ENCODE measurements at regions of chr1 and their contacts with region 1.

Region 1: DNA sequence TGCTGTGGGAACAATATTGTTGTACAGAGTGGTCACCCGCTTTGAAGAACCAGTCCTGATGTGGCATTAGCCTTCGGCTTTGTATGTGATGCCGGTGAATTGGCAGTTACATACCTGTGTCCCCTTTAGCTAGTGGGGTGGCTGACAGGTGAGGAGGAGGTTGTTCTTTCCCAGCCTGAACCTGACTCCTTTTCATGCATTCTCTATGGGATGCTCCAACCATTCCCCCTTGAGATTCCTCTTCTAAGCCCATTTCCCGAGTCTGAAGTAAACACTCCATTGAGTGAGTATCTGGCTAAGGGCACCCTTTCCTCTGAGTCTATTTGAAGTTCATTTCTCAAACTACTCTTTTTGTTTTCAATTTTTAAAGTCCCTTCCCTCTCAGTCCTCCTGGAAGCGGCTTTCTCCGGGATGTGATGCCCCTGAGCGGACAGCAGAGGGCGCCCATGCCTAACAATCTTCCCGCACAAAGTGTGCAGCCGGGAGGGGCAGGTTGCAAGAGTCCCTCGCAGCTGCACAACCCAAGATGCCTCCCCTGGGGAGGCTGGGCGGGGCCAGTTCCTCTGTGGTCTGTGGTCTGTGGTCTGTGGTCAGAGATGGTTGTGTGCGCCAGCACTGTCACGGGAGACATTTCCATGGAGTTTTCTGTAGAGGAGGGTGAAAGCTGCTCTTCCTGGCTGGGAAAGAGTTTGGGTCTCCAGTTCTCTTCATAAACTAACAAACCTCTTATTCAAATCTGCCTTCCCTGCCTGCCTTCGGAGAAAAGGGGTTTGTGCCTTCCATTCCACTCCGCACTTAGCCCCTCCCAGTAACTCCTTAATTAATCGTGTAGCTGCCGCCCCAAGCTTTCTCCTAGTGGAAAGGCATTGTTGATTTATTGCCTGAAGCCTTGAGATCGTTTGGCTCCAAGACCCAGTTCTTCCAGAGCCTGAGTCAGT is 36.4 kb upstream of the LMX1A start:
- DNase-seq: peak; percentile 94
- ATAC-seq: peak; percentile 99
- H3K4me3 ChIP-seq: peak overlapping the region in 1 of 5 experiments; percentile 24
- H3K4me3 Mint-ChIP-seq: peak overlapping the region; percentile 55
- H3K27ac ChIP-seq: no peak overlapping the region
- H3K27ac Mint-ChIP-seq: peak overlapping the region; percentile 91
- H3K4me1 ChIP-seq: peaks cover 20 to 33% of the 10 kb centered on the region in 2 donors
- H3K4me1 Mint-ChIP-seq: peaks cover 15% of the 10 kb centered on the region
- H3K27me3 ChIP-seq: peaks cover 0 to 84% (median 75%) of the 10 kb centered on the region in 4 experiments
- H3K27me3 Mint-ChIP-seq: peaks cover 82% of the 10 kb centered on the region
- CTCF ChIP-seq: peak; percentile 93

Region 2: GRCh38 chr1:164813776-164814175 is 579.1 kb before region 1 on chr1:
- CTCF ChIA-PET with region 1: no interaction called
- POLR2A ChIA-PET with region 1: no interaction called
- intact Hi-C with region 1: no loop called
- DNase-seq: no peak
- ATAC-seq: no peak
- H3K4me3 ChIP-seq: no peak overlapping the region
- H3K4me3 Mint-ChIP-seq: no peak overlapping the region
- H3K27ac ChIP-seq: no peak overlapping the region
- H3K27ac Mint-ChIP-seq: no peak overlapping the region
- H3K4me1 ChIP-seq: no peaks in the 10 kb centered on the region
- H3K4me1 Mint-ChIP-seq: no peaks in the 10 kb centered on the region
- H3K27me3 ChIP-seq: no peaks in the 10 kb centered on the region
- H3K27me3 Mint-ChIP-seq: peaks cover 6% of the 10 kb centered on the region
- CTCF ChIP-seq: no peak

Region 3: DNA sequence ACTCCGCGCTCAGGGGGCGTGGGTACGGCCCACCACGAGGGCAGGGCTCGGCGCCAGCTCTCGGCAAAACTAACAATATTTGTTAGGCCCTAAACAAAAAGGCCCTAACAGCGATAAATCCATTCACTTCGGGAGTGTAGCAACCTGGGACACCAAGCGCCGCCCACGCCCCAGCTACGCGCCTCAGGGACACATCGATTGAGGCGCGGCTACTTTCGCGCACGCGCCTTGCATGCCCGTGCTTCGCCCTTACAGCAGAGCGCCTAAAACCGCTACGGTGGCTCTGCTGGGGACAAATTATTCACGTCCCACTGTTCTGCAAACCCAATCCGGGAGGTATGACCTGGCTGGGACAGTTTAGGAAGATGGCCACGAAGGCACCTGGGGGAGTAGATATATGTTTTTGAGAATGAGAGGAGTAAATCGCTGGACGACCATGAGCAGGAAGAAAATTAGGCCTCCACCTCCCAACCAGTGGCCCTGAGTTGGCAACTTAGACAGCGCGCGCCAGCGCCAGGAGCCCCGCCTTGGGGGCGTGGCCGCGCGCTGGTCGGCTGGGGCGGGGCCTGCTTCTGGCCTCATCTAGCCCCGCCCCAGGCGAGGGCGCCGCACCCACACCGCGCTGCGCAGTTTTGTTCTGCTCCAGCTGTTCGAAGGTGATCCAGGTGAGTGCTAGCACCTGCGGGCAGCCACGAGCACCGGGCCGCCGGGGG is 237.9 kb after region 1 on chr1 and contains the start of gene MGST3:
- CTCF ChIA-PET with region 1: no interaction called
- POLR2A ChIA-PET with region 1: no interaction called
- intact Hi-C with region 1: loop called (anchors 1 kb)
- DNase-seq: peak; percentile 95
- ATAC-seq: peak; percentile 94
- H3K4me3 ChIP-seq: peak within 1 kb of the TSS; percentile 74 to 93 (median 84)
- H3K4me3 Mint-ChIP-seq: no peak within 1 kb of the TSS
- H3K27ac ChIP-seq: peak within 1 kb of the TSS; percentile 72 to 83
- H3K27ac Mint-ChIP-seq: peak within 1 kb of the TSS; percentile 67
- H3K4me1 ChIP-seq: peaks cover 27 to 31% of the 10 kb centered on the region in 2 donors
- H3K4me1 Mint-ChIP-seq: peaks cover 31% of the 10 kb centered on the region
- H3K27me3 ChIP-seq: no peaks in the 10 kb centered on the region
- H3K27me3 Mint-ChIP-seq: no peaks in the 10 kb centered on the region
- CTCF ChIP-seq: no peak
- total RNA-seq, gene MGST3: 41.7 and 46.0 TPM in 2 replicates

Region 4: DNA sequence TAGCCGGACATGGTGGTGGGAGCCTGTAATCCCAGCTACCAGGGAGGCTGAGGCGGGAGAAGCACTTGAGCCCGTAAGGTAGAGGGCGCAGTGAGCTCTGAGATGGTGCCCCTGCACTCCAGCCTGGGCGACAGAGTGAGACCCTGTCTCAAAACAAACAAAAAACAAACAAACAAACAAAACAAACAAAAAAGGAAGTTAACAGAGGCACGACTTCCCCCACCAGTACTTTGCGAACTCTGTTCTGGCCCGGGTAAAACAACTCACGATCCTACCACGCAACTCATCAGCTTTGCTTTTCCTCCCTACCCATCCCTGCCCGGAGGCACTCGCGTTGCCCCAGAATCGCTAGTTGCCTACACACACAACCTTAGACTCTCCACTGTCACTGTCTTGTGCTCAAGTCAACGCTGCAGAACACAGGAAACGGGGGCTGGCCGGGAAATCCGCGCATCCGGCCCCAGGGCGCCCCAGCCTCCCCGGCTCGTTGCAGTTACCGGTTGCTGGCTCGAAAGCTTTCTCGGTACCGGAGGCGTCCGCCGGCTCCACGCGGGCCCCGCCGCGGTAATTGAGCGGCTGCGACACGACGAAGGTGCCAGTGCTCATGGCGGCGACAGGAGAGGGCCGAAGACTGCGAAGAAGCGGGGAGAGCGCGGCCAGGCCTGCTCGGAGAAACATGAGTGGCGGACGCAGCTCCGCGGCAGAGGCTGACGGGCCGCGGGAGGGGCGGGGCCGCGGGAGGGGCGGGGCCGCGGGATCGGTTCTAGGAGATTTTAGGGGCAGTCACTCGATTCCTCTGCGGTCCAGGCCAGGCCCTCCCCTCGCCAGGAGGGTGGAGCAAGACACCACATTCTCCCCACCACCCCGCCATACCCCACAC is 305.2 kb after region 1 on chr1 and contains the start of gene ALDH9A1:
- CTCF ChIA-PET with region 1: no interaction called
- POLR2A ChIA-PET with region 1: no interaction called
- intact Hi-C with region 1: loop called (anchors 1 kb)
- DNase-seq: peak; percentile 89
- ATAC-seq: peak; percentile 89
- H3K4me3 ChIP-seq: peak within 1 kb of the TSS; percentile 73 to 96 (median 95)
- H3K4me3 Mint-ChIP-seq: peak within 1 kb of the TSS; percentile 92
- H3K27ac ChIP-seq: peak within 1 kb of the TSS; percentile 90 to 92
- H3K27ac Mint-ChIP-seq: peak within 1 kb of the TSS; percentile 91
- H3K4me1 ChIP-seq: peaks cover 15 to 18% of the 10 kb centered on the region in 2 donors
- H3K4me1 Mint-ChIP-seq: peaks cover 25% of the 10 kb centered on the region
- H3K27me3 ChIP-seq: peaks cover 0 to 4% (median 0%) of the 10 kb centered on the region in 4 experiments
- H3K27me3 Mint-ChIP-seq: peaks cover 3% of the 10 kb centered on the region
- CTCF ChIP-seq: peak; percentile 24
- total RNA-seq, gene ALDH9A1: 37.5 and 37.9 TPM in 2 replicates

Region 5: GRCh38 chr1:165914136-165914798 is 521.4 kb after region 1 on chr1:
- CTCF ChIA-PET with region 1: interaction called, 5 read pairs
- POLR2A ChIA-PET with region 1: no interaction called
- intact Hi-C with region 1: loop called (anchors 1 kb)
- DNase-seq: peak; percentile 81
- ATAC-seq: peak; percentile 84
- H3K4me3 ChIP-seq: no peak overlapping the region
- H3K4me3 Mint-ChIP-seq: no peak overlapping the region
- H3K27ac ChIP-seq: no peak overlapping the region
- H3K27ac Mint-ChIP-seq: no peak overlapping the region
- H3K4me1 ChIP-seq: no peaks in the 10 kb centered on the region
- H3K4me1 Mint-ChIP-seq: peaks cover 2% of the 10 kb centered on the region
- H3K27me3 ChIP-seq: no peaks in the 10 kb centered on the region
- H3K27me3 Mint-ChIP-seq: no peaks in the 10 kb centered on the region
- CTCF ChIP-seq: peak; percentile 90

Region 6: DNA sequence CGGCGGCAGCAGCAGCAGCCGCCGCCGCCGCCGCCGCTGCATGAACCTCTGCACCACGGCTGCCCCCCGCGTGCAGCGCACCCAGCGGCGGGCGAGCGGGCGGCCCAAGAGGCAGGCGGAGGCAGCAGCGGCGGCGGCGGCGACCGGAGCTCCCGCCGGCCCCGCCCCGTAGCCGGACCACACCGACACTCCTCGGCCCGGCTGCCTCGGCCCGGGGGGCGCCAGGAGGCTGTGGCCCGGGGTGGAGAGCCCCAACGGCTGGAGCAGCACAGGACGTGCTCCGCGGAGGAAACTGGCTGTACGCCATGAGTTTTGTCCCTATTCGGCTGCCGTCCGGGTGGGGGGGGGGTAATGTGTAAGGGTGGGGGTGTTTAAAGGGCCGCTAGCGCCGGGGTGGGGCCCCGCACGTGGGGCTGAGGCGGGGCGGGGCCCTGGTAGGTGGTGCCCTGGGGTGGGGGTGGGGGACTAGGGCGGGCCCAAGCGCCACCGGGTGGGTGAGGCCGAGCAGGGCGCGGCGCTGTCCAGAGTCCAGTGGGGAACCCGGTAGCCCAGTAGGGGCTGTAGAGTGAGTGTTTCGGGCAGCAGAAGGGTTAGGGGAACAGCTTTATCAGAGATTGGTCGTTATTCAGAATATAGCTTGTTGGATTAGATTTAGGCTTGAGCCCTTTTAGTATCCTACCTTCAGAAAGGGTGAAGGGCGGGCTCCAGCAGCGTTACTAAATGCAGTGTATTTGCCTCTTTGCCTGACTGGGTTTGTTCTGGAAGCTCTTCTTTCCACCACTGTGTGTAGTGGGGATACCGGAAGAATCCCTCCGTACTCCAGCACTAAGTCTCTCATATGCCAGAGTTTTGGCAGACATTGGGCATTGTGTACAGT is 774.0 kb after region 1 on chr1 and contains the start of gene FAM78B:
- CTCF ChIA-PET with region 1: no interaction called
- POLR2A ChIA-PET with region 1: no interaction called
- intact Hi-C with region 1: loop called (anchors 10 kb)
- DNase-seq: peak; percentile 77
- ATAC-seq: peak; percentile 80
- H3K4me3 ChIP-seq: peak within 1 kb of the TSS in 3 of 5 experiments; percentile 33 to 62 (median 55)
- H3K4me3 Mint-ChIP-seq: peak within 1 kb of the TSS; percentile 84
- H3K27ac ChIP-seq: no peak within 1 kb of the TSS
- H3K27ac Mint-ChIP-seq: peak within 1 kb of the TSS; percentile 34
- H3K4me1 ChIP-seq: peaks cover 21 to 22% of the 10 kb centered on the region in 2 donors
- H3K4me1 Mint-ChIP-seq: peaks cover 22% of the 10 kb centered on the region
- H3K27me3 ChIP-seq: peaks cover 0 to 29% (median 20%) of the 10 kb centered on the region in 4 experiments
- H3K27me3 Mint-ChIP-seq: peaks cover 42% of the 10 kb centered on the region
- CTCF ChIP-seq: no peak
- total RNA-seq, gene FAM78B: 0.46 and 0.81 TPM in 2 replicates